Panc1 (cell line): ENCODE measurements at regions of chr9 and their contacts with region 1.

Region 1: DNA sequence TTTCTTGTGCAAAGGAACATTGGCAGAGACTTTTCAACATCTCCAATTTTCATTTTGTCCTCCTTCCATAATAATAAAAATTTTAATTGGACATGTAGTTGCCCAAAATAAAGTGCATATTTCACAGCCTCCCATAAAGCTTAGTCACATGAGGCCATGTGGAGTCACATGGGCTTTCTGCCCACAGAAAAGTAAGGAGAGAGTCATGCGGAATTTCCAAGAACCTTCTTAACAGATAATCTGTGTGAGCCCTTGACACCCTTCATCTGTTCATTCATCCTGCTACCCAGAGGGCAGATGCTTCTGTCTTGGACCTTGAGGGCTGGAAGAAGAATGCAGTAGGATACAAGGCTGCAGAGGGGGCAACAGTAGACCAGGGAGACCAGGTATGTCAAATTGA is 60.7 kb downstream of the APTX start:
- DNase-seq: no peak
- ATAC-seq: no peak
- H3K4me3 ChIP-seq: no peak overlapping the region
- H3K27ac ChIP-seq: no peak overlapping the region
- H3K4me1 ChIP-seq: no peaks in the 10 kb centered on the region
- H3K27me3 ChIP-seq: no peaks in the 10 kb centered on the region
- CTCF ChIP-seq: no peak

Region 2: DNA sequence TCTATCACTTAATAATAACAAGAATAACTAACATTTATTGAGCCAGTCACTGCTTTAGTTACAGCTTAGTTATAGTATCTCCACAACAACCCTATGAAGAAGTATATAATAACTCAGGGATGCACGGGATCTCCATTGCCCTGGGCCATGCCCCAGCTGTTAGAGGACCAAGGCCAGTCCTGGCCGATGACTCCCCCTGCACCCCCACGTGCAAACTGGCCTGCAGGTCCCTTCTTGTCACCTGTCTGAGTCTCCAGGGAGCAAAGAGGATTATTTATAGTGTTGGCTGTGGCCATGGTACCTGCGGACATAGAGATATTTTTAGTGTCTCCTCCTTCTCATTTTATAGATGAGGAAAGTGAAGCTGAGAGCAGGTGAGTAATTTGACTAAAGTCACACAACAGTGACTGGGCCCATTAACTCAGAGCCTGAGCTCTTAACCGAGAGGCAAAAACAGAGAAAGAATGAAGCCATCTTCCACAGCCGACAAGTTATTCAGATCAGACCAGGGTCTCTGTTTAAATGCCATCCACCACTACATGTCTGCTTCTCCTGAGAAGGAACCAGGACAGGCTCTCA is 63.0 kb before region 1 on chr9:
- CTCF ChIA-PET with region 1: no interaction called
- POLR2A ChIA-PET with region 1: no interaction called
- in situ Hi-C with region 1: no loop called
- intact Hi-C with region 1: loop called (anchors 10 kb)
- DNase-seq: no peak
- ATAC-seq: no peak
- H3K4me3 ChIP-seq: no peak overlapping the region
- H3K27ac ChIP-seq: no peak overlapping the region
- H3K4me1 ChIP-seq: no peaks in the 10 kb centered on the region
- H3K27me3 ChIP-seq: no peaks in the 10 kb centered on the region
- CTCF ChIP-seq: no peak

Region 3: DNA sequence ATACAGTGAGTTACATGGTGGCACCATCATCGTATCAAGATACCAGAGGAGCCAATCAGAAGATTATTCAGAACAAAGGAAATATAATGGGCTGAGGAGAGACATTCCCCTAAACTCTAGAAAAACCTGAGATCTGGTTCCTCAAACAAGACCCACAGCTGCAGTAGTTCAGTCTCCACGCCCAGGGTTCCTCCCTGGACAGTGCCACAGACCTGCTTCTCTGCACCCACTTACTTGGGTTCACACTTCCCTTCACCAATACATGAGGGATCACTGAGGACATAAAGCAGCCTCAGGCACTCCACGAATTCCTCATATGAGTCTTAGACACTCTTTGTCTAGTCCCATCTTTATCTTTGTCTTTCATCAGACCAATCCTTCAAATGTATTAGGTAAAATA is 41.0 kb before region 1 on chr9:
- CTCF ChIA-PET with region 1: no interaction called
- POLR2A ChIA-PET with region 1: no interaction called
- in situ Hi-C with region 1: no loop called
- intact Hi-C with region 1: loop called (anchors 5 kb)
- DNase-seq: no peak
- ATAC-seq: no peak
- H3K4me3 ChIP-seq: no peak overlapping the region
- H3K27ac ChIP-seq: no peak overlapping the region
- H3K4me1 ChIP-seq: no peaks in the 10 kb centered on the region
- H3K27me3 ChIP-seq: no peaks in the 10 kb centered on the region
- CTCF ChIP-seq: no peak